Testis (tissue), 5 donors: ENCODE measurements at regions of chr14 and their contacts with region 1.

Region 1: GRCh38 chr14:29222671-29223268 is 456.2 kb downstream of the FOXG1 start:
- DNase-seq: peak; percentile 45
- H3K4me3 ChIP-seq: no peak overlapping the region
- H3K27ac ChIP-seq: no peak overlapping the region
- H3K4me1 ChIP-seq: no peaks in the 10 kb centered on the region
- H3K27me3 ChIP-seq: no peaks in the 10 kb centered on the region
- CTCF ChIP-seq: peak; percentile 9 to 42 (median 40)
- POLR2A ChIP-seq: no peak

Region 2: DNA sequence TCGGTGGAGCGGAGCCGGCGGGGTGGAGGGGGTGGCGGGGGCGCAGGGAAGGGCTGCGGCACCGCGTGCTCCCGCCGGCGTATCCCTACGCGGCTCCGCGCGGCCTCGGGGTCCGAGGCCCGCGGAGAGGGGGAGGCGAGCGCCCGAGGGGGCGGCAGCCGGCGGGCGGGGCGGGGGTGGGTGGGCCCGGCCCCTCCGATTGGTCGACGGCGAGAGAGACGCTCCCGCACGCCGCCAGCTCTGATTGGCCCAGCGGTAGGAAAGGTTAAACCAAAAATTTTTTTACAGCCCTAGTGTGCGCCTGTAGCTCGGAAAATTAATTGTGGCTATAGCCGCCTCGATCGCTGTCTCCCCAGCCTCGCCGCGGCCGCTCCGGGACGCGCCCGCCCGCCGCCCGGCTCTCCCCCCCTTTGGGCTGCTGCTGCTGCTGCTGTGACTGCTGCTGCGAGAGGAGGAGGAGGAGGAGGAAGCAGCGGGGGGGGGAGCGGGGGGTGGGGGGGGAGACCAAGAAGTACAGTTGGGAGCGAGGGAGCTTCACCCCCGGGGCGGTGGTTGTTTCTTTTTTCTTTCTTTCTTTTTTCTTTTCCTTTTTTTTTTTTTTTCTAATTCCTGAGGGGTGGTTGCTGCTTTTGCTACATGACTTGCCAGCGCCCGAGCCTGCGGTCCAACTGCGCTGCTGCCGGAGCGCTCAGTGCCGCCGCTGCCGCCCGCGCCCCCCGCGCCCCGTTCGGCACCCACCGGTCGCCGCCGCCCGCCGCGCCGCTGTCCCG is 456.1 kb before region 1 on chr14 and contains the start of gene FOXG1:
- intact Hi-C with region 1: loop called (anchors 10 kb)
- DNase-seq: peak; percentile 61
- H3K4me3 ChIP-seq: peak within 1 kb of the TSS; percentile 49 to 58
- H3K27ac ChIP-seq: peak within 1 kb of the TSS in 1 of 2 donors; percentile 47
- H3K4me1 ChIP-seq: no peaks in the 10 kb centered on the region
- H3K27me3 ChIP-seq: no peaks in the 10 kb centered on the region
- CTCF ChIP-seq: no peak
- POLR2A ChIP-seq: no peak
- total RNA-seq, gene FOXG1: 4.5 to 5.5 TPM

Region 3: DNA sequence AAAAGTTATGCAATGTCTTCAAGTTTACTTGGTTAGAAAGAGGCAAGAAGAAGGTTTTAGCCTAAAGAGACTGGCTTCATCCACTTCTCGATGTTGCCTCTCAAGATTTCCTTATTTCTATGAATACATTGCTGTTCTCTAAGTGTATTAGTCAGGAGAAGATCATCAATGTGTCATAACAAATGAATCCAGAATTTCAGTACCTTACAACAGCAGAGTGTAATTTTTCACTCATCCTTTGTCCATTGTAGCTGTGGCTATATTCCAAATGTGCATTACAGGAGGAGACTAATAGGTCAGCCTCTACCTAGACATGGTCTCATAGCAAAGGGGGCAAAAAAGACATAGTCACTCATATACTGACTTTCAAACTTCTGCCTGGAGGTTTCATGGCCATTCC is 125.7 kb after region 1 on chr14:
- intact Hi-C with region 1: no loop called
- DNase-seq: no peak
- H3K4me3 ChIP-seq: no peak overlapping the region
- H3K27ac ChIP-seq: no peak overlapping the region
- H3K4me1 ChIP-seq: no peaks in the 10 kb centered on the region
- H3K27me3 ChIP-seq: no peaks in the 10 kb centered on the region
- CTCF ChIP-seq: no peak
- POLR2A ChIP-seq: no peak